ENCODE measurements at regions of chr4 and their contacts with region 1.

Region 1: GRCh38 chr4:24419181-24420034 is 164.9 kb downstream of the DHX15 start:
- DNase-seq: peak; percentile 40 to 73 (median 49)
- ATAC-seq: peak; percentile 32
- H3K4me3 ChIP-seq: no peak overlapping the region
- H3K4me3 Mint-ChIP-seq: no peak overlapping the region
- H3K27ac ChIP-seq: no peak overlapping the region
- H3K27ac Mint-ChIP-seq: no peak overlapping the region
- H3K4me1 ChIP-seq: peaks cover 6% of the 10 kb centered on the region
- H3K4me1 Mint-ChIP-seq: peaks cover 5% of the 10 kb centered on the region
- H3K27me3 ChIP-seq: peaks cover 0 to 4% of the 10 kb centered on the region in 2 experiments
- H3K27me3 Mint-ChIP-seq: peaks cover 22% of the 10 kb centered on the region
- CTCF ChIP-seq: peak; percentile 96

Region 2: GRCh38 chr4:22897520-22898108 is 1521.8 kb before region 1 on chr4:
- CTCF ChIA-PET with region 1: no interaction called
- POLR2A ChIA-PET with region 1: no interaction called
- intact Hi-C with region 1: loop called in 1 of 2 experiments (anchors 2 kb)
- DNase-seq: peak in 5 of 14 experiments; percentile 2 to 26 (median 12)
- ATAC-seq: no peak
- H3K4me3 ChIP-seq: no peak overlapping the region
- H3K4me3 Mint-ChIP-seq: no peak overlapping the region
- H3K27ac ChIP-seq: no peak overlapping the region
- H3K27ac Mint-ChIP-seq: no peak overlapping the region
- H3K4me1 ChIP-seq: no peaks in the 10 kb centered on the region
- H3K4me1 Mint-ChIP-seq: no peaks in the 10 kb centered on the region
- H3K27me3 ChIP-seq: no peaks in the 10 kb centered on the region
- H3K27me3 Mint-ChIP-seq: peaks cover 6% of the 10 kb centered on the region
- CTCF ChIP-seq: peak; percentile 72

Region 3: GRCh38 chr4:23015821-23016220 is 1403.6 kb before region 1 on chr4:
- CTCF ChIA-PET with region 1: no interaction called
- POLR2A ChIA-PET with region 1: no interaction called
- intact Hi-C with region 1: no loop called
- DNase-seq: no peak
- ATAC-seq: no peak
- H3K4me3 ChIP-seq: no peak overlapping the region
- H3K4me3 Mint-ChIP-seq: no peak overlapping the region
- H3K27ac ChIP-seq: no peak overlapping the region
- H3K27ac Mint-ChIP-seq: no peak overlapping the region
- H3K4me1 ChIP-seq: no peaks in the 10 kb centered on the region
- H3K4me1 Mint-ChIP-seq: no peaks in the 10 kb centered on the region
- H3K27me3 ChIP-seq: no peaks in the 10 kb centered on the region
- H3K27me3 Mint-ChIP-seq: no peaks in the 10 kb centered on the region
- CTCF ChIP-seq: no peak

Region 4: GRCh38 chr4:23135792-23136645 is 1283.4 kb before region 1 on chr4:
- CTCF ChIA-PET with region 1: no interaction called
- POLR2A ChIA-PET with region 1: no interaction called
- intact Hi-C with region 1: loop called in 1 of 2 experiments (anchors 5 kb)
- DNase-seq: peak in 3 of 14 experiments; percentile 17 to 39 (median 27)
- ATAC-seq: no peak
- H3K4me3 ChIP-seq: no peak overlapping the region
- H3K4me3 Mint-ChIP-seq: no peak overlapping the region
- H3K27ac ChIP-seq: no peak overlapping the region
- H3K27ac Mint-ChIP-seq: no peak overlapping the region
- H3K4me1 ChIP-seq: no peaks in the 10 kb centered on the region
- H3K4me1 Mint-ChIP-seq: no peaks in the 10 kb centered on the region
- H3K27me3 ChIP-seq: no peaks in the 10 kb centered on the region
- H3K27me3 Mint-ChIP-seq: no peaks in the 10 kb centered on the region
- CTCF ChIP-seq: peak; percentile 64

Measured in CD4-positive, alpha-beta T cell (primary cell).